Activated naive CD4-positive, alpha-beta T cell treated with anti-CD3 and anti-CD28 coated beads, Interleukin-2, amount 10 ng/mL, durations not matched to agents 7 days and 5 days (primary cell): ENCODE measurements at regions of chr11 and their contacts with region 1.

Region 1: GRCh38 chr11:67265633-67266423 is 445 bp upstream of the GRK2 start:
- DNase-seq: peak; percentile 79
- H3K4me3 Mint-ChIP-seq: peak overlapping the region; percentile 75
- H3K27ac Mint-ChIP-seq: peak overlapping the region; percentile 79
- H3K4me1 Mint-ChIP-seq: peaks cover 67% of the 10 kb centered on the region
- H3K27me3 Mint-ChIP-seq: peaks cover 10% of the 10 kb centered on the region

Region 2: DNA sequence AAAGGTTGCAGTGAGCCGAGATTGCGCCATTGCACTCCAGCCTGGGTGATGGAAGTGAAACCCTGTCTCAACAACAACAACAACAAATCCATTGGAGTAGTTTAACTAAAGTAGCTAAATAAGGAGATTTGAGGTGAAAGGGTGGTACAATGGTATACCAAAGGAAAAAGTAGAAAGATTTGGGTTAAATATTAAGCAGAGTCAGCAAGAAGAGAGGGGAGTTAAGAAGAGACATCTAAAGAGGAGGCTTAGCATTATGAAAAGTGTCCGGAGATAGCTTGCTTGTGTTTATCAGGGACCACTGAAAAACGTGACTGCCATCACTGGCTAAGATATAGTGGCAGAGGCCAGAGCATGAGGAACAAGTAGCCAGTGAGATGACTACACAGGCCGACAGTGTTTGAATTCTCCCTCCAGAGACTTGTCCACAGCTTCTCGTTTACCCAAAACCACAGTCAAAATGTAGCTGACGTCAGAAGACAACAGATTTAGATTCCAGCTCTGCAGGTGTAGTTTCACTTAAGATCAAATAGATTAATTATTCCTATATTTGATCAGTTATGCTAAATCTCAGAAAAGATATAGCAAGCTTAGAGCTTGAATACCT is 32.1 kb before region 1 on chr11:
- CTCF ChIA-PET with region 1: no interaction called
- DNase-seq: no peak
- H3K4me3 Mint-ChIP-seq: no peak overlapping the region
- H3K27ac Mint-ChIP-seq: peak overlapping the region; percentile 0
- H3K4me1 Mint-ChIP-seq: peaks cover 37% of the 10 kb centered on the region
- H3K27me3 Mint-ChIP-seq: no peaks in the 10 kb centered on the region

Region 3: GRCh38 chr11:67252831-67253239 is 13.0 kb before region 1 on chr11:
- CTCF ChIA-PET with region 1: interaction called, 36 read pairs
- DNase-seq: peak; percentile 64
- H3K4me3 Mint-ChIP-seq: no peak overlapping the region
- H3K27ac Mint-ChIP-seq: peak overlapping the region; percentile 85
- H3K4me1 Mint-ChIP-seq: peaks cover 52% of the 10 kb centered on the region
- H3K27me3 Mint-ChIP-seq: no peaks in the 10 kb centered on the region

Region 4: DNA sequence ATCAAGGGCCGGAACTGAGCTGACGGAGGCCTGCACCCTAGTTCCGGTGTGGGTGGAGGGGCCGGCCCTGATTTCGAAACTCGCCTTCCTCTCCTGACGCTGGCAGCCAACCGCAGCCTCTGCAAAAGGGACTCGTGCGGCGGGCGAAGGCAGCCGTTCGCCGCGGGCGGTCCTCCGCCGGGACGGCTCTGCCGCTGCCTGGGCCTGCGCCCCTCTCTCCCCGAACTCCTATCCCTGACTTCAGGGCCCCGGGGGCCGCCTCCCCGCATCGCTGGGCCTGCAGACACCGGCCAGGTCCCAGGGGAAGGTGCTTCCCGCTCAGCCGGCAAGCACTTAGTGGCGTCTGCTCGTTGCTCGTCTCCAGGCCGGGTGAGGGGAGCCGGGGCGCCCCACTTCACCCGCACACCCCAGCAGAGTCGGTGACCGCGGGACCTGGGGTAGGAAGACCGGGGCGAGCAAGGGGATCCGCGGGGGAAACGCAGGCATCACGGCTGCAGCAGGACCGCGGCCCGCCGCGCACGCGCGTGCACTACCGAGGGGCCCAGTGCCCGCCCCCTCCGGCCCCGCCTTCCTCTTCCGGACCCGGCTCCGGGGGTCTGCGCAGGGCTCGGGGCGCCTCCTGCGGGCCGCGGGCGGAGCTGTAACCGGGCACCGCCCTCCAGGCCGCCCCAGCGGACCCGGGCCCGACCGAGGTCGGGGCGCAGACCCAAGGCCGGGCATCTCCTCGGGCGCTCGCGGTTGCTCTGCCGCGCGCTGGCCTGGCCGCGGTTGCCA is 22.8 kb after region 1 on chr11:
- CTCF ChIA-PET with region 1: interaction called, 22 read pairs
- DNase-seq: peak; percentile 94
- H3K4me3 Mint-ChIP-seq: peak overlapping the region; percentile 77
- H3K27ac Mint-ChIP-seq: peak overlapping the region; percentile 99
- H3K4me1 Mint-ChIP-seq: peaks cover 78% of the 10 kb centered on the region
- H3K27me3 Mint-ChIP-seq: peaks cover 12% of the 10 kb centered on the region

Region 5: DNA sequence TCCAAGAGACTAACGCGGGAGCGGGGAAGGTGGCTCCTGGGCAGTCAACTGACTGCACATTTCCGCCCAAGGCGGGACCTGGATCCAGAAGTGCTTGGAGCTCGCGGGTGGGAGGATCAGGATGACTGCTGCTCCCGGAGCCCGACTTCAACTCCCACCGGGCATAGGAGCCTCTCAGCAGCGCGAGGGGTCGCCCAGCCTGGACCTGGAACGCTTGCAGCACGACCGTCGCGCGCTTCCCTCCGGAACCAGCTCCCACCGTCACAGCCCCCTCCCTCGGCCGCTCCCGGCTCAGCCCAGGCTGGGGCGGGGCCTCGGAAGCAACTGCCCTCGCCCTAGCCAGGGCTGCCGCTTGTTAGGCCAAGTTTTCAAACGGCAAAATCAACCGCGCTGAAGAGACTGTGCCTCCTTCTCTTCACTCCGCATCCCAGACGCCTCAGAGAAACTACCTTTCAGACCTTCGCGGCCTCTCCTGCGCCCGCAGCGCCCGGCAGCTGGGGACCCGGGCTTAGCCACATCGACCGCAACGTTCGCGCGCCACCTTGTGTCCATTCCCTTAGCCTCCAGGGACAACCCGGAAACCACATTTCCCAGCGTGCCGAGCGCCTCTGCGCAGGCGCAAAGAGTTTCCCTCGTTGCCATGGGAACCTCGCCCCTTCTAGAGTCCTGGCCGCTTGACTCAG is 51.5 kb after region 1 on chr11:
- CTCF ChIA-PET with region 1: interaction called, 117 read pairs
- DNase-seq: peak; percentile 98
- H3K4me3 Mint-ChIP-seq: peak overlapping the region; percentile 97
- H3K27ac Mint-ChIP-seq: peak overlapping the region; percentile 98
- H3K4me1 Mint-ChIP-seq: peaks cover 48% of the 10 kb centered on the region
- H3K27me3 Mint-ChIP-seq: peaks cover 21% of the 10 kb centered on the region

Region 6: DNA sequence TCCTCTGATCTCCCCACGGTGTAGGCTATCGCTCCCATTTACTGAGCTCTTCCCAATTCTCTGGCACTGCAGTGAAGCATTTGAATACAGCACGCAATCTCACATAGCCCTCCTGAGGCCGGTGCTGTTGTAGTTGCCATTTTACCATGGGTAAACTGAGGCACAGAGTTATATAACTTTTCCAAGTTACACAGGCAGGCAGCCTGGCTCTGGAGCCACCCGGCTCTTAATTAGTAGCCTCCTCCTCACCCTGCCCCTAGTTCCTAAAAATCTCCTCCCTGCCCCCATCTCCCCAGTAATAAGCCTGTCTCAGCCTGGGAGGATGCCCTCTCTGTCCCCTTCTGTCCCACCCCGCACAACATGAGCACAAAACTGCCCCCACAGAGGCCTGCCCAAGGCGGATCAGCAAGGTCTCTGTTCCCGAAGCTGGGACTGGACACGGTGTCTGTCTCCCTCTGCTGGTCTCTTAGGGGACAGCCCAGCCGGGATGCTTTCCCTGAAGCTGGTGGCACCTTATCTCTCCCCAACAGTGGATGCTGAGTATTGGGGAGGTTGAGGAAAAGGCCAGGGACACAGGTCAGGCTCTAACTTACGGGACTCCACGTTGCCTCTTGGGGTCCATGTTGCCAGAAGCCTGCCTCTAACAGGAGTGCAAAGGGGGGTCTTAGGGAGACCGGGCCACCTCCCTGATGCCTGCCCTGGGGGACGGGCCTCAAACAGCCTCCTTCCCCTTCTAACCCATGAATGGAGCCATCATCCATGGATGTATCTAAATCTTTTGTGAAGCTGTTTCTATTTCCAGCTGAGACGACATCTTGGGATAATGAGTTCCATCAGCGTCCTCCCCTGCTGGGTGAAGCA is 116.7 kb after region 1 on chr11:
- CTCF ChIA-PET with region 1: interaction called, 23 read pairs
- DNase-seq: peak; percentile 90
- H3K4me3 Mint-ChIP-seq: no peak overlapping the region
- H3K27ac Mint-ChIP-seq: no peak overlapping the region
- H3K4me1 Mint-ChIP-seq: peaks cover 3% of the 10 kb centered on the region
- H3K27me3 Mint-ChIP-seq: peaks cover 81% of the 10 kb centered on the region